A673 (cell line): ENCODE measurements at regions of chr12 and their contacts with region 1.

Region 1: GRCh38 chr12:111599459-111600204 is 517 bp upstream of the ATXN2 start:
- DNase-seq: peak; percentile 97
- H3K4me3 ChIP-seq: peak overlapping the region; percentile 83
- H3K27ac ChIP-seq: peak overlapping the region; percentile 98
- H3K4me1 ChIP-seq: peaks cover 11% of the 10 kb centered on the region
- H3K27me3 ChIP-seq: no peaks in the 10 kb centered on the region
- CTCF ChIP-seq: no peak

Region 2: DNA sequence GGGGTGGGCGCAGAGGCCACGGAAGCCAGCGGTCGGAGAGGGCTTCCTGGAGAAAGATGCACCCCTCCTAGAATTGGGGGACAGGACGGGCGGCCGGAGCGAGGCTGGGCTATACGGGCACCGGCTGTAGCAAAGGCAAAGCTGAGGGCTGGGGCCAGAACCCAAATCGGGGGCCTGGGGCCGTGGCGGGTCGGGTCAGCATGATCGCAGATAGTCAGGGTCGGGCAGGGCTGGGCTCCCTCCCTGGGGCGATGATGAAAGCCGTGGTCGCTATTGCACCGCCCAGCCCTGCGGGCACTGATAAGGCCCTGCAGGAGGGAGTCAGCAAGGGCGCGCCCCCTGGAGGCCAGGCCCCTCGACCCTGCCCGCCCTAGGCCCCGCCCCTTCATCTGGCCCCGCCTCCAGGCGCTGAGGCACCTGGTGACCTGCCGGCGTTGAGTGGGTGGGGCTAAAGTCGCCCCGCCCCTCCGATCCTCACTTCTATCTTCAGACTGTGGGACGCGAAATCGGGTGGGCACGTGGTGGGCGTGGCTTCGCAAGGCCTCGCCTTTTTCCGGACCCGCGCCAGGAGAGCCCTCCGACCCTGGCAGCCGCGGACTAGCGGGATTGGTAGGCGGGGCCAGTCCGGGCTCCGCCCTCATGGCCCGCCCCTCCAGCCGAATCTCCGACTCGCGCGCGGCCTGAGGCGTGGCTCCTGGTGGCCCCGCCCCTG is 194.3 kb before region 1 on chr12:
- CTCF ChIA-PET with region 1: no interaction called
- POLR2A ChIA-PET with region 1: no interaction called
- intact Hi-C with region 1: loop called (anchors 5 kb)
- DNase-seq: peak; percentile 99
- H3K4me3 ChIP-seq: peak overlapping the region; percentile 80
- H3K27ac ChIP-seq: peak overlapping the region; percentile 98
- H3K4me1 ChIP-seq: peaks cover 48% of the 10 kb centered on the region
- H3K27me3 ChIP-seq: no peaks in the 10 kb centered on the region
- CTCF ChIP-seq: peak; percentile 60; the same call in 1 of the 2 replicates

Region 3: DNA sequence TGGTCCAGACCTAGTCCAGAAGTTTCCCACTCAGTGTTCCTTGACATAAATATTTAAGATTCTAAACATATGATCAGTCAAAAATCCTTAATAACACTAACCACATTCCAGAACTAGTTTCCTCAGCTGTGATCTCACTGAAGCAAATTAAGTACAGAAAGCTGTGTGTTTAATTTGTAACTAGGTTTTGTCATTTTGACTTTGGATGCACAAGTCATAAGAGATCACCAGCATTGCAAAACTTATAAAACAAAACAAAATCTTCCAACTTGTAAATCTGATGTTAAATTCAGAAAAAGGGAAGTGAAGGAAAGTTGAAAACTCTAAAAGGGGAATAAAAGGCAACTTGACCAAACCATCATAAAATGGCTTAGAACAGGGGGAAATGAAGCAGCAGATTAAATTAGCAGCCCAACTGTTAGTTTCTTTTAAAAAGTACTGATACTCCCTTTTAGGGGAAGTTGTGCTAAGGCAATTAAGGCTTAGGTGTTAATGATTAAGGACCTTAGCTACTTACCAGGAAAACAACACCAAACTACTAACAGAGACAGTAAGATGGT is 137.3 kb before region 1 on chr12:
- CTCF ChIA-PET with region 1: no interaction called
- POLR2A ChIA-PET with region 1: no interaction called
- intact Hi-C with region 1: no loop called
- DNase-seq: no peak
- H3K4me3 ChIP-seq: no peak overlapping the region
- H3K27ac ChIP-seq: peak overlapping the region; percentile 58
- H3K4me1 ChIP-seq: peaks cover 11% of the 10 kb centered on the region
- H3K27me3 ChIP-seq: no peaks in the 10 kb centered on the region
- CTCF ChIP-seq: no peak

Region 4: GRCh38 chr12:111656016-111656415 is 56.4 kb after region 1 on chr12:
- CTCF ChIA-PET with region 1: no interaction called
- POLR2A ChIA-PET with region 1: interaction called, 11 read pairs
- intact Hi-C with region 1: no loop called
- DNase-seq: no peak
- H3K4me3 ChIP-seq: no peak overlapping the region
- H3K27ac ChIP-seq: no peak overlapping the region
- H3K4me1 ChIP-seq: no peaks in the 10 kb centered on the region
- H3K27me3 ChIP-seq: no peaks in the 10 kb centered on the region
- CTCF ChIP-seq: no peak